BJ (cell line): ENCODE measurements at regions of chr22 and their contacts with region 1.

Region 1: DNA sequence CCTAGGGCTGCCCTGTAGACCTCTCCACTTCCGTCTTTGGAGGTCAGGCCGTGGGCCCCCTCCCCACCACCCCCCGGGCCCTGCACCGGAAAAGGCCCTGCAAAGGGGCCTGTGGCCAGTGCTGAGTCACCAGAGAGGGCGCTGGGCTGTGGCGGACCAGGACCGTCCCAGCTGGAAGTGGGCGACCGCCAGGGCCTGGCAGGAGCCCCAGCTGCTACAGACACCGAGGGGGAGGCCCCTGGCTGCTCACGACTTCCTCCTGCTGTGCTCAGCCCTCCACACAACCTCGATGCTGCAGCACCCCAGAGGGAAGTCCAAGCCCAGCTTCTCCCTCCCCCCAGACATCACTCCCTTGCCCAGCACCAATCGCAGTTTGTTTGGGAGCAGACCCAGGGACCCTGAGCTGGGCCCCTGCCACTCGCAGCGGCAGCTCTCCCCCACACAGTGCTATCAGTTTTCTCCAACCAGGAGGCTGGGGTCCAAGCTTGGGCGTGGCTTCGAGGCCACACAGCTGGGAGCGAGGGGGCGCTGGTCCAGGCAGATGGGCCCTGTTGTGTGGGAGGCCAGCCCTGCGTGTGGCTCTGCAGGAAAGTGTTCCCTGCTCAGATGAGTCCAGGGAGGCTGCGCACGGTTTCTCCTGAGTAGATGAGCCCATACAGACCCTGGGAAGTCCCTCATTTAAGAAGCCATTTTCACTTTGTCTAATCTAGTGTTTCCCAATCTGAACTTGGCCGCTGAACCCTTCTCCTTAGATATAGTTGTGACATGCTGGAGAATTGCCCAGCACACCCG is 5.6 kb upstream of the SH3BP1 start:
- DNase-seq: peak; percentile 33
- H3K4me3 ChIP-seq: no peak overlapping the region
- H3K27me3 ChIP-seq: no peaks in the 10 kb centered on the region
- CTCF ChIP-seq: peak; percentile 48; the same call in 1 of the 2 replicates

Region 2: GRCh38 chr22:37267135-37267587 is 366.7 kb before region 1 on chr22:
- CTCF ChIA-PET with region 1: no interaction called
- POLR2A ChIA-PET with region 1: interaction called, 18 read pairs
- DNase-seq: no peak
- H3K4me3 ChIP-seq: peak overlapping the region; percentile 41
- H3K27me3 ChIP-seq: peaks cover 6% of the 10 kb centered on the region
- CTCF ChIP-seq: peak; percentile 95

Region 3: GRCh38 chr22:37623075-37624016 is 10.5 kb before region 1 on chr22:
- CTCF ChIA-PET with region 1: interaction called, 35 read pairs
- POLR2A ChIA-PET with region 1: no interaction called
- DNase-seq: no peak
- H3K4me3 ChIP-seq: no peak overlapping the region
- H3K27me3 ChIP-seq: no peaks in the 10 kb centered on the region
- CTCF ChIP-seq: peak; percentile 93